Mammary epithelial cell (primary cell): ENCODE measurements at regions of chr7 and their contacts with region 1.

Region 1: GRCh38 chr7:14691597-14692203 is 210.9 kb downstream of the DGKB start:
- DNase-seq: no peak
- H3K4me3 ChIP-seq: no peak overlapping the region
- H3K27ac ChIP-seq: no peak overlapping the region
- H3K4me1 ChIP-seq: no peaks in the 10 kb centered on the region
- H3K27me3 ChIP-seq: no peaks in the 10 kb centered on the region
- CTCF ChIP-seq: peak; percentile 75 to 79

Region 2: GRCh38 chr7:13279854-13280435 is 1411.8 kb before region 1 on chr7:
- CTCF ChIA-PET with region 1: interaction called, 5 read pairs
- dilution Hi-C with region 1: no loop called
- in situ Hi-C with region 1: loop called (anchors 25 kb)
- intact Hi-C with region 1: loop called (anchors 1 kb)
- DNase-seq: no peak
- H3K4me3 ChIP-seq: no peak overlapping the region
- H3K27ac ChIP-seq: no peak overlapping the region
- H3K4me1 ChIP-seq: no peaks in the 10 kb centered on the region
- H3K27me3 ChIP-seq: no peaks in the 10 kb centered on the region
- CTCF ChIP-seq: peak; percentile 24 to 33

Region 3: GRCh38 chr7:13476881-13477444 is 1214.7 kb before region 1 on chr7:
- CTCF ChIA-PET with region 1: no interaction called
- dilution Hi-C with region 1: no loop called
- in situ Hi-C with region 1: no loop called
- intact Hi-C with region 1: loop called (anchors 1 kb)
- DNase-seq: no peak
- H3K4me3 ChIP-seq: no peak overlapping the region
- H3K27ac ChIP-seq: no peak overlapping the region
- H3K4me1 ChIP-seq: no peaks in the 10 kb centered on the region
- H3K27me3 ChIP-seq: no peaks in the 10 kb centered on the region
- CTCF ChIP-seq: peak in 1 of 2 donors; percentile 11

Region 4: GRCh38 chr7:13532028-13532753 is 1159.5 kb before region 1 on chr7:
- CTCF ChIA-PET with region 1: no interaction called
- dilution Hi-C with region 1: no loop called
- in situ Hi-C with region 1: no loop called
- intact Hi-C with region 1: loop called (anchors 5 kb)
- DNase-seq: no peak
- H3K4me3 ChIP-seq: no peak overlapping the region
- H3K27ac ChIP-seq: no peak overlapping the region
- H3K4me1 ChIP-seq: no peaks in the 10 kb centered on the region
- H3K27me3 ChIP-seq: no peaks in the 10 kb centered on the region
- CTCF ChIP-seq: no peak

Region 5: DNA sequence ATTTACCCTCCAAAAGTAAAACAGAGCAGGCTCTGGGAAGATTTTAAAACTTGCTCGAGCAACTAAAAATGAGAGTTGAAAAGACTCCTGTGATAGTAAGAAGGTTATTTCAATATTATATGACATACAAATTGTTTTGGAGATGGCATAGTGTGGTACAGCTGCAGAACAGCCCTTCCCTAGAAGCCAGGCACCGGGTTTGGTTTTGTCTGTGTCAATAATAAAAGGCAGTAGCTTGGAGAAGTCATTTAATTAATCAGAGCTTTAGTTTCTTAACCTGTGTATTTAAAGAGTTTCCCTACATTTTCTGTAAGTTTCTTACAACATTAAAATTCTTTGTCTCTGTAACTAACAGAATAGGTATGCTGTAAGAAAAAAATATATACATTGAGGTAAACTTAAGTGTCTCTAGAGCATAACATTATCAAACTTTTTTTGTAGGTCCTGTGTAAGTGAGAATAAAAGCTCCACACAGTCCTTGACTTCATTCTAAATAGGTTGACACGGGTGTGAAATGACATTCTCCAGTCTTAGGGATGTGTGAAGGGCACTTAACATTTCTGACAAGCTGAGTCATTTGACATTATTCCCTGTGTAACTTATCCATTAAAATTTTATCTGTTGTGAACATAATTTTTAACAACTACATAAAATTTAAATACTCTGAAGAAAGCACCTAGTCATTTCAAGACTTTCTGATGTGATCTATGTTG is 277.3 kb before region 1 on chr7:
- CTCF ChIA-PET with region 1: no interaction called
- dilution Hi-C with region 1: no loop called
- in situ Hi-C with region 1: no loop called
- intact Hi-C with region 1: no loop called
- DNase-seq: no peak
- H3K4me3 ChIP-seq: no peak overlapping the region
- H3K27ac ChIP-seq: no peak overlapping the region
- H3K4me1 ChIP-seq: no peaks in the 10 kb centered on the region
- H3K27me3 ChIP-seq: no peaks in the 10 kb centered on the region
- CTCF ChIP-seq: no peak

Region 6: DNA sequence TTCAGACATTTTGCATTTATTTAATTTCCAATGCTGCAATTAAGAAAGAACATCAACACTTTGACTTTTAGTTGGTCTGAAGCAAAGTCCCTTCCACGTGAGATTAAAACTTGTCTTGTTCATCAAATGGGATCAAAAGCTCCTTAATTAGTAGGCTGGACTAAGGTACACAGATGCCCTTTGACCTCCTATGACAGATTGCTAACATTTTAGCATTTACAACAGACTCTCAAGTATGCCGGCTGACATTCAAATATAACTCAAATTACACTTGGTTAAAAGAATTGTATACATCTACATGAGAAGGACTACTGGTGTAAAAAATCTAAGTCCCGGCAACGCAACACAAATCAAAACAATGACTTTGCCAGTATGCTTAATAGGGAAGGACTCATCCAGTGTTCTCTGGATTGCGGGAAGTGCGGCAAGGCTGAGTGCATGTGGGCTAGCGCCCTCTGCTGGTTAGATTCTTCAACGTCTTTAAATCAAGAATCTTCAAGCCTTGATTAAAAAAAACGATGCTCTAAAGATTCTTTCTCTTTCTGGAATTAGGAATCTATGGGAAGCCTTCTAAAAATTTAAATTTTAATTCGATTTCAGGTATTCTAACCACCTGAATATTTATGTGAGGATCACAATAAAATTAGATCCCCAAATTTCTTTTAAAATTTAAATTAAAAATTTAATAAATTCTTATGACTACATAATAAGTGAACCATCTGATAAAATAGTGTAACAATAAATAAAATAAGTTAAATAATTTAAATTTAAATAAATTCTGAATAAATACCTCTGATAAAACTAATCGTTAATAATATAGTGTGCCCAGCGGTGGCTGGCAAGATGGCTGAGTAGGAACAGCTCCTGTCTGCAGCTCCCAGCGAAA is 233.9 kb before region 1 on chr7:
- CTCF ChIA-PET with region 1: no interaction called
- dilution Hi-C with region 1: no loop called
- in situ Hi-C with region 1: no loop called
- intact Hi-C with region 1: loop called (anchors 2 kb)
- DNase-seq: peak; percentile 60
- H3K4me3 ChIP-seq: no peak overlapping the region
- H3K27ac ChIP-seq: no peak overlapping the region
- H3K4me1 ChIP-seq: no peaks in the 10 kb centered on the region
- H3K27me3 ChIP-seq: no peaks in the 10 kb centered on the region
- CTCF ChIP-seq: peak; percentile 71 to 90

Region 7: GRCh38 chr7:14483663-14484062 is 208.0 kb before region 1 on chr7:
- CTCF ChIA-PET with region 1: no interaction called
- dilution Hi-C with region 1: no loop called
- in situ Hi-C with region 1: no loop called
- intact Hi-C with region 1: loop called (anchors 1 kb)
- DNase-seq: no peak
- H3K4me3 ChIP-seq: no peak overlapping the region
- H3K27ac ChIP-seq: no peak overlapping the region
- H3K4me1 ChIP-seq: no peaks in the 10 kb centered on the region
- H3K27me3 ChIP-seq: no peaks in the 10 kb centered on the region
- CTCF ChIP-seq: peak in 1 of 2 donors; percentile 38